Heart left ventricle (tissue), 16 donors: ENCODE measurements at regions of chr4 and their contacts with region 1.

Region 1: GRCh38 chr4:38062088-38062893 is 102.1 kb downstream of the PTTG2 start:
- DNase-seq: peak; percentile 67 to 85 (median 78)
- ATAC-seq: peak; percentile 46 to 80 (median 66)
- H3K4me3 ChIP-seq: peak overlapping the region in 9 of 12 donors; percentile 31 to 55 (median 39)
- H3K27ac ChIP-seq: peak overlapping the region in 11 of 12 donors; percentile 59 to 83 (median 73)
- H3K4me1 ChIP-seq: peaks cover 0 to 33% (median 17%) of the 10 kb centered on the region in 12 donors
- H3K27me3 ChIP-seq: no peaks in the 10 kb centered on the region
- CTCF ChIP-seq: peak; percentile 81 to 95 (median 88)
- POLR2A ChIP-seq: no peak

Region 2: DNA sequence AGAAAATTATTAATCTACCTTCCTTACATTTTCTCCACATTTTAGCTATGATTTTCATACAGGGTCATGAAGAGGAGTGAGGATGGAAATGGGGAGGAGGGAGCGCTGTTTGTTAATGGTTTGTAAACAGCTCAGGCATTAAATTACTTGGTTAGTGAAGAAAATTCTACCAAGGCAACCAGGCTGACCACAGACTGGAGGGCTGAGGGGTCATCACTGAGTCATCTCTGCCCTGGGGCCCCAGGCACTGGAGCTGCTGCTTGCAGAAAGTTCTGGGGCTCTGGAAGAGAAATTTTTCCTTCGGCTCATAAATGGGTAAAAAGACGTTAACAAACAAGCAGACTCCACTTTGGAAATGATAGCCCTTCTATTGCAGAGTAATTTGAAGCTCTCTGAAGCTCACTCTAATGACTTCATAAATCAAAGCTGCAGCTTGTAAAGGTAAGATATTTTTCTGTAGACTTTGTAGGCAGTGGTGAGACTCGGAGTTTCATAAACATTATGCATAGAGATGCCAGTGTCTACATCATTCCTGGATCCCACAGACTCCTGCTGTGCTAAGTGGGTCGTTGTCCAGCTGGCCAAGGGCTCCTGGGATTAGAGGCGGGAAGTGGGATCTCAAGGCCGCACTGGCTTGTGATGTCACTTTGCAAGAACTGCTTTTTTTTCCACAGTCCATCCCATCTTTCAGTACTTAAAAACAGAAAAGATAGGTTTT is 57.5 kb after region 1 on chr4:
- intact Hi-C with region 1: loop called in 1 of 10 experiments (anchors 5 kb)
- DNase-seq: peak in 3 of 5 donors; percentile 40 to 67 (median 48)
- ATAC-seq: peak in 3 of 4 donors; percentile 33 to 74 (median 73)
- H3K4me3 ChIP-seq: no peak overlapping the region
- H3K27ac ChIP-seq: peak overlapping the region in 8 of 12 donors; percentile 14 to 58 (median 32)
- H3K4me1 ChIP-seq: peaks cover 0 to 34% (median 8%) of the 10 kb centered on the region in 12 donors
- H3K27me3 ChIP-seq: no peaks in the 10 kb centered on the region
- CTCF ChIP-seq: no peak
- POLR2A ChIP-seq: no peak

Region 3: GRCh38 chr4:38663801-38664705 is 601.8 kb after region 1 on chr4 and contains the start of gene KLF3:
- intact Hi-C with region 1: loop called in 1 of 10 experiments (anchors 1 kb)
- DNase-seq: peak; percentile 95 to 98 (median 96)
- ATAC-seq: peak; percentile 84 to 91 (median 86)
- H3K4me3 ChIP-seq: peak within 1 kb of the TSS; percentile 81 to 98 (median 92)
- H3K27ac ChIP-seq: peak within 1 kb of the TSS; percentile 97 to 100 (median 100)
- H3K4me1 ChIP-seq: peaks cover 0 to 54% (median 33%) of the 10 kb centered on the region in 12 donors
- H3K27me3 ChIP-seq: no peaks in the 10 kb centered on the region
- CTCF ChIP-seq: no peak
- POLR2A ChIP-seq: peak in 1 of 2 donors; percentile 92
- total RNA-seq, gene KLF3: 17.8 to 36.4 (median 21.1) TPM

Region 4: GRCh38 chr4:38730830-38731646 is 668.7 kb after region 1 on chr4:
- intact Hi-C with region 1: loop called in 9 of 10 experiments (anchors 2 to 5 kb)
- DNase-seq: peak; percentile 76 to 90 (median 79)
- ATAC-seq: peak; percentile 78 to 91 (median 89)
- H3K4me3 ChIP-seq: no peak overlapping the region
- H3K27ac ChIP-seq: no peak overlapping the region
- H3K4me1 ChIP-seq: peaks cover 0 to 21% (median 4%) of the 10 kb centered on the region in 12 donors
- H3K27me3 ChIP-seq: no peaks in the 10 kb centered on the region
- CTCF ChIP-seq: peak; percentile 88 to 98 (median 96)
- POLR2A ChIP-seq: no peak

Region 5: DNA sequence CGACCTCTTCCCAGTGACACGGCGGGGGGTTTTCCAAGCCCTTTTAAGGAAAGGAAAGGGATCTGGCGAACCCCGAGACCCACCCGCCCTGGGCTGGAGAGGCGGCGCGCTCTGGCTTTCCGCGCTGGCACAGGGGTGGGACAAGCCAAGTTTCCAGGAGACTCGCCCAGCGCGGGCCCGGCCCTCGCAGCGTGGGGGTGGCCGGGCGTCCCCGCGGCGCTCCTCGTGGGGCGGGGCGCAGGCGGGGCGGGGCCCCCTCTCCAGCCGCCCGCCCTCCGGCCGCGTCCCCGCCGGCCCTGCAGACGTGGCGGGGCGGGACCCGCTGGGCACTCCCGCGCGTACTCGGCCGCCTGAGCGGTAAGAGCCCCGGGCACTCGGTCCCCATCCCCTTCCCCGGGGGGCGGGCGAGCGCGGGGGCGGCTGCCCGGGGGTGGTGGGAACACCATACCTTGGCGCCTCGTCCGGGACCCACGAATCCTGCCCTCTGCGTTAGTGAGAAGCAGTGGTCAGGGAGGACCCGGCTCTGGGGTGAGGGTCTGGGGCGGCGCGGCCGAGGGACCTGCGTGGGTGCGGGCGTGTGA is 805.3 kb after region 1 on chr4 and contains the start of gene FAM114A1:
- intact Hi-C with region 1: loop called in 1 of 10 experiments (anchors 10 kb)
- DNase-seq: peak; percentile 87 to 92 (median 88)
- ATAC-seq: peak; percentile 84 to 98 (median 95)
- H3K4me3 ChIP-seq: peak within 1 kb of the TSS; percentile 67 to 93 (median 88)
- H3K27ac ChIP-seq: peak within 1 kb of the TSS; percentile 75 to 96 (median 89)
- H3K4me1 ChIP-seq: peaks cover 0 to 48% (median 16%) of the 10 kb centered on the region in 12 donors
- H3K27me3 ChIP-seq: no peaks in the 10 kb centered on the region
- CTCF ChIP-seq: peak in 2 of 12 donors; percentile 8 to 13
- POLR2A ChIP-seq: no peak
- total RNA-seq, gene FAM114A1: 11.4 to 41.5 (median 24.2) TPM